ENCODE measurements at regions of chr3 and their contacts with region 1.

Region 1: GRCh38 chr3:133573054-133573628 is 345 bp upstream of the CDV3 start:
- DNase-seq: peak; percentile 99 to 100
- H3K4me3 ChIP-seq: peak overlapping the region; percentile 52
- H3K27ac ChIP-seq: peak overlapping the region; percentile 91
- H3K4me1 ChIP-seq: peaks cover 71% of the 10 kb centered on the region
- H3K27me3 ChIP-seq: no peaks in the 10 kb centered on the region
- CTCF ChIP-seq: no peak

Region 2: DNA sequence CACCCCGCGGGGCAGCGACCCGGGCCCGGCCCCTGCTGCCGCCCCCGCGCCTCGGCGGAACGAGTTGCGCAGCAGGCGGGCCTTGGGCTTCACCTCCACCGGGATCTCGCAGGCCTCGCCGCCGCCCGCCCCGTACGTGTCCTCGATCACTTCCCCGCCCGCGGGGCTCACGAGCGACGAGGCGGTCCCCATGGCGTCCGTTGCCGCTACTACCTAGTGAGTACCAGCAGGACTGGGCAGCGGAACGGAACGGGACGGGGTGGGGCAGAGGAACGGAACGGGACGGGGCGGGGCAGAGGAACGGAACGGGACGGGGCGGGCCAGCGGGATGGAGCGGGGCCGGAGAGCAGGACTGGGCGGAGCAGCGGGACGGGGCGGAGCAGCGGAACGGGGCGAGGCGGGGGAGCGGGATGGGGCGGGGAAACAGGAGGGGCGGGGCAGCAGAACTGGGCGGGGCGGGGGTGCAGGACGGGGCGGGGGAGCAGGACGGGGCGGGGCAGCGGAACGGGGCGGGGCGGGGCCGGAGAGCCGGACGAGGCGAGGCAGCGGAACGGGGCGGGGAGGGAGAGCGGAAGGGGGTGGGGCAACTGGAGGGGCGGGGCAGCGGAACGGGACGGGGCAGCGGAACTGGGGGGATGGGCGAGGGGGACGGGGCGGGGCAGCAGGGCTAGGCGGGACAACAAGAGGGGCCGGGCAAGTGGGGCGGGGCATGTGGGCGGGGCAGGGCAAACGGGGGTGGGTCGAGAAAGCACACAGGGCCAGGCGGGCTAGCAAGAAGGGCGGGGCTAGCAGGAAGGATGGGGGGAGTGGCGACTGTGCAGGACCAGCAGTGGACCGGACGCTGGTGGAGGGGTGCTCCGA is 850.7 kb before region 1 on chr3 and contains the start of gene NPHP3:
- CTCF ChIA-PET with region 1: no interaction called
- POLR2A ChIA-PET with region 1: interaction called, 3 read pairs
- intact Hi-C with region 1: loop called (anchors 2 kb)
- DNase-seq: peak; percentile 74 to 93
- H3K4me3 ChIP-seq: peak within 1 kb of the TSS; percentile 91
- H3K27ac ChIP-seq: peak within 1 kb of the TSS; percentile 33
- H3K4me1 ChIP-seq: peaks cover 13% of the 10 kb centered on the region
- H3K27me3 ChIP-seq: no peaks in the 10 kb centered on the region
- CTCF ChIP-seq: no peak
- total RNA-seq, gene NPHP3: 23.4 and 26.5 TPM in 2 replicates

Region 3: DNA sequence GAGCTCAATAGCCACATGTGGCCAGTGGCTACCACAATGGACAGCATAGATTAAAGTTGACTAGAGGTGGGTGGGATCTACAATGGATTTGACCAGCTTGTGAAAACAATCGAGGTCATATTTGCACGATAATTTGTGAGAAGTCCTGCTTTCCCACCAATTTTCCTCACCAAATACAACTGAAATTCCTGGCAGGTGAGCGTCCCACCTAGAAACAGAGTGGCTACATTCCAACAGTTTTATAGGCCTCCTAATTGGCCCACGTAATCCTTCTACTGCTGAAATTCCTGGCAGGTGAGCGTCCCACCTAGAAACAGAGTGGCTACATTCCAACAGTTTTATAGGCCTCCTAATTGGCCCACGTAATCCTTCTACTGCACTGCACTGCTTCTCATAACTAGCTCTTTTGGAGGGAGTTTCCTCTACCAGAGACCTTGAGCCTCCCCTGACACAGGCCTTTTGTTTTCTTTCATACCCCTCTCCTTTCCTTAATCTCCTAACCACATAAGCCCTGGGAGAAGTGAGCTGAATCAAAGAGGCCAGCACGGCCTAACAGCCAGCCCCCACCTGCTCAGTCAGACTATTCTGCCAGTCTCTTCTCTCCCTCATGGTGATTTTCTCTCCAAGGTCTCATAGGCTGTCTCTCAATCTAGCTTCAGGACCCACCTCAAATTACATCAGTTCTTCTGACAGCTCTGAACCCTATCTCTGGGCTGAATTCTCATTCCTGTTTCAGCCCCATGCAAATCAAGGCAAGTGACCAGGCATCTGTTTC is 93.1 kb before region 1 on chr3:
- CTCF ChIA-PET with region 1: no interaction called
- POLR2A ChIA-PET with region 1: interaction called, 15 read pairs
- intact Hi-C with region 1: loop called (anchors 1 kb)
- DNase-seq: peak; percentile 67 to 97
- H3K4me3 ChIP-seq: no peak overlapping the region; the same call in 1 of the 2 replicates
- H3K27ac ChIP-seq: peak overlapping the region; percentile 98
- H3K4me1 ChIP-seq: peaks cover 20% of the 10 kb centered on the region
- H3K27me3 ChIP-seq: no peaks in the 10 kb centered on the region
- CTCF ChIP-seq: no peak

Region 4: GRCh38 chr3:133540896-133541674 is 32.1 kb before region 1 on chr3:
- CTCF ChIA-PET with region 1: interaction called, 6 read pairs
- POLR2A ChIA-PET with region 1: interaction called, 13 read pairs
- intact Hi-C with region 1: loop called (anchors 2 kb)
- DNase-seq: peak in 1 of 2 experiments; percentile 78
- H3K4me3 ChIP-seq: no peak overlapping the region
- H3K27ac ChIP-seq: peak overlapping the region; percentile 37
- H3K4me1 ChIP-seq: peaks cover 48% of the 10 kb centered on the region
- H3K27me3 ChIP-seq: no peaks in the 10 kb centered on the region
- CTCF ChIP-seq: no peak

Region 5: GRCh38 chr3:133600572-133601081 is 27.5 kb after region 1 on chr3:
- CTCF ChIA-PET with region 1: no interaction called
- POLR2A ChIA-PET with region 1: interaction called, 10 read pairs
- intact Hi-C with region 1: no loop called
- DNase-seq: no peak
- H3K4me3 ChIP-seq: no peak overlapping the region
- H3K27ac ChIP-seq: no peak overlapping the region
- H3K4me1 ChIP-seq: no peaks in the 10 kb centered on the region
- H3K27me3 ChIP-seq: no peaks in the 10 kb centered on the region
- CTCF ChIP-seq: no peak

Region 6: GRCh38 chr3:134308350-134308891 is 735.3 kb after region 1 on chr3:
- CTCF ChIA-PET with region 1: no interaction called
- POLR2A ChIA-PET with region 1: no interaction called
- intact Hi-C with region 1: loop called (anchors 5 kb)
- DNase-seq: peak; percentile 74 to 88
- H3K4me3 ChIP-seq: no peak overlapping the region
- H3K27ac ChIP-seq: peak overlapping the region; percentile 98
- H3K4me1 ChIP-seq: peaks cover 52% of the 10 kb centered on the region
- H3K27me3 ChIP-seq: no peaks in the 10 kb centered on the region
- CTCF ChIP-seq: peak; percentile 99

Region 7: DNA sequence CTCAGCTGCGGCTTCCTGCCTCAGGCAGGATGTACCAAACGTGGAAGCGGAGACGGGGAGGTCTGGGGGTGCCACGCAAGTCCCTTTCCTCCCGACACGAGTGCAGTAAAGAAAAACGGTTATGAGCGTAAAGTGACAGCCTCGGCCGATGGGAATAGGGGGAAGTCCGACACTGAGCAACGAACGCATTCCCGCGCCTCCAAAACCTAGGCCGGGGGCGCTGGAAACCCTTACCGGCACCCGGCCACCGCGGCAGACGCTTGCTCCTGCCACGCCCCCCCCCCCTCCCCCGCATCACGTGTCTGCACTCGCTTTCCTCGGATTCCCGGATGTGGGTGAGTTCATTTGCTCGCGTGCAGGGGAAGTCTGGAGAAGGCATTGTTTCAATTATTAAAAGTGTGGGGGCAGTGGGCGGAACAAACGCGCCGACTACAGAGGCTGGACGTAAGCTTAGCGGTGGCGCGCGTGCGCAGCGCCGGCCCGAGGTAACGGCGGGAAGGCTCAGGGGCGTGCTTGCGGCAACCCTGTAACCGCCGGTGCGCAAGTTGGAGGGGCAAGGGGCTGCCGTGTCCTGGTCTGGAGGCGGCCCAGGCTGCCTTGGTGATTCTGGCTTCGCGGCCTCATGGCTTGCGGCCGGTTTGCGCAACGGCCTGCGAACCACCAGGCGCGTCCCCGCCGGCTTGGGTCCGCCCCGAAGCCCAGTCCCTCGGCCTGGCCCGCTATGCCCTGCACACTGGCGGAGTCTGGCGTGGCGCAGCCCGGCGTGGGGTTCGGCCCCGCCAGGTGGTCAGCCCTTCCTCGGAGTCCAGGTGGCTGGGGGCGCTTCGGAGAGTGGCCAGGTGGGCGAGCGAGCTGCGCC is 912.8 kb after region 1 on chr3 and contains the starts of genes ANAPC13 and CEP63:
- CTCF ChIA-PET with region 1: no interaction called
- POLR2A ChIA-PET with region 1: no interaction called
- intact Hi-C with region 1: loop called (anchors 5 kb)
- DNase-seq: peak; percentile 95
- H3K4me3 ChIP-seq: peak within 1 kb of the TSS; percentile 89
- H3K27ac ChIP-seq: peak within 1 kb of the TSS; percentile 73
- H3K4me1 ChIP-seq: peaks cover 27% of the 10 kb centered on the region
- H3K27me3 ChIP-seq: no peaks in the 10 kb centered on the region
- CTCF ChIP-seq: no peak
- total RNA-seq, gene ANAPC13: 52.7 and 61.8 TPM in 2 replicates
- total RNA-seq, gene CEP63: 28.5 and 31.5 TPM in 2 replicates